ENCODE measurements at regions of chr3 and their contacts with region 1.

Region 1: DNA sequence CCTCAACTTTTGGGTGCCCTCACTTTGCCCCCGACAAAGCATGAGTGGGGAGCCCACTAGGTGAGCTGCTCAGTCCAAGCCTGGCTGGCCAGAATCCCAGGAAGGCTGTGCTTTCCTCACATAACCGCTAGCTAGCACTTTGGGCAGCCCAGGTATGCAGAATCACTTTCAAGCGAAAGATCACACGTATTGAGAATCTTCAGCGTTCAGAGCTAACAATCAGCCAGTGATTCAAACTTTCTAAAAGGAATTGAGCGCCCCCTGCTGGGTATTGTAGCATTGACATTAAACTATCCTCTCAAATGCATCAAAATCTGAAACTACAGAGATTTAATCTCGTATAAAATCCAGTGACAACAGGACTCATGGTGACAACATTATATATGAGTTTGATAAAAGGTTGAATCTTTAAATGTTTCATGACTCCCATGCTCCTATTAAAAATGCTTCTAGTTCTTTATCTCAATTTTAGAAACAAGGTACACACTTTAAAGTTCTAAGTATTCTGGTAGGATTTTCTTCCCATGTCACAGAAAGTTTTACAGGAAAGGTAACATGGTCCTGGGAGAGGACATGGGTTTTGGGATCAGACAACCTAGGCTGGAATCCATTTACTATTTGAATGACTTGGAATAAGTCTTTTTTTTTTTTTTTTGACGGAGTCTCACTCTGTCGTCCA is 11.8 kb downstream of the ANAPC13 start:
- DNase-seq: peak; percentile 18 to 71
- ATAC-seq: peak; percentile 71 to 82
- H3K4me3 ChIP-seq: no peak overlapping the region
- H3K27ac ChIP-seq: peak overlapping the region; percentile 63 to 88
- H3K4me1 ChIP-seq: peaks cover 48% of the 10 kb centered on the region
- CTCF ChIP-seq: peak; percentile 73
- EP300 ChIP-seq: no peak
- POLR2A ChIP-seq: no peak
- RAD21 ChIP-seq: peak; percentile 85 to 88

Region 2: GRCh38 chr3:134427400-134428145 is 46.4 kb before region 1 on chr3:
- CTCF ChIA-PET with region 1: interaction called, 23 read pairs
- POLR2A ChIA-PET with region 1: no interaction called
- DNase-seq: peak; percentile 70 to 94
- ATAC-seq: peak; percentile 95
- H3K4me3 ChIP-seq: no peak overlapping the region
- H3K27ac ChIP-seq: peak overlapping the region; percentile 87 to 89
- H3K4me1 ChIP-seq: peaks cover 43% of the 10 kb centered on the region
- CTCF ChIP-seq: no peak
- EP300 ChIP-seq: peak; percentile 84 to 91; a peak in 4 of 5 replicates
- POLR2A ChIP-seq: no peak
- RAD21 ChIP-seq: peak; percentile 18 to 36; a peak in 1 of 5 replicates

Region 3: GRCh38 chr3:134485718-134486576 is 11.9 kb after region 1 on chr3 and contains the starts of genes ANAPC13 and CEP63:
- CTCF ChIA-PET with region 1: interaction called, 22 read pairs
- POLR2A ChIA-PET with region 1: interaction called, 3 read pairs
- DNase-seq: peak; percentile 87 to 98
- ATAC-seq: peak; percentile 91 to 93
- H3K4me3 ChIP-seq: peak within 1 kb of the TSS; percentile 84
- H3K27ac ChIP-seq: peak within 1 kb of the TSS; percentile 95 to 99
- H3K4me1 ChIP-seq: peaks cover 21% of the 10 kb centered on the region
- CTCF ChIP-seq: no peak
- EP300 ChIP-seq: no peak
- POLR2A ChIP-seq: peak; percentile 47; the same call in 1 of the 2 replicates
- RAD21 ChIP-seq: no peak
- polyA plus RNA-seq, gene ANAPC13: 92.0 and 109 TPM in 2 replicates
- polyA plus RNA-seq, gene CEP63: 14.0 and 24.0 TPM in 2 replicates